Right cardiac atrium (tissue), 5 donors: ENCODE measurements at regions of chr9 and their contacts with region 1.

Region 1: GRCh38 chr9:107282753-107283625 is at the start of gene RAD23B:
- DNase-seq: peak; percentile 99 to 100 (median 99)
- ATAC-seq: peak; percentile 98
- H3K4me3 ChIP-seq: peak within 1 kb of the TSS; percentile 76
- H3K27ac ChIP-seq: peak within 1 kb of the TSS; percentile 94
- H3K4me1 ChIP-seq: no peaks in the 10 kb centered on the region
- H3K27me3 ChIP-seq: no peaks in the 10 kb centered on the region
- total RNA-seq, gene RAD23B: 85.4 to 95.0 (median 89.9) TPM

Region 2: DNA sequence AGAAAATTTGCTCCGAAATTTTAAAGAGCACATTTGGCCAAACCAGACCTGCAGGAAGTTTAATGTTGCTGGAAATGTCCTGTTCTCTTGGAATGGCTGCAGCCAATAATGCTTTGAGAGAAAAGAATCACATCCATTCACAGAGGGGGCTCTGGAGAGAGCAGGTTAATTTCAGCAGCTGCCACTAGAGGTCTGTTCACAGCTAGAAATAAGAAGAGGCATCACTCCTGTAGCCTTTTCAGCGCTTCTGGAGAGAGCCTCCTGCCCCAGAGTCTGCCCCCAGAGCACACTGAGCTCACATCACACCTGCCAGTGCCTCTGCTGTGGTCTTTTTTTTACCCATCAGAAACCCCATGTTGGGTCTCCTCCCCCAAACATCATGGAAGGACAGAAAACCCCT is 124.7 kb before region 1 on chr9:
- intact Hi-C with region 1: no loop called
- DNase-seq: no peak
- ATAC-seq: no peak
- H3K4me3 ChIP-seq: no peak overlapping the region
- H3K27ac ChIP-seq: no peak overlapping the region
- H3K4me1 ChIP-seq: no peaks in the 10 kb centered on the region
- H3K27me3 ChIP-seq: no peaks in the 10 kb centered on the region

Region 3: DNA sequence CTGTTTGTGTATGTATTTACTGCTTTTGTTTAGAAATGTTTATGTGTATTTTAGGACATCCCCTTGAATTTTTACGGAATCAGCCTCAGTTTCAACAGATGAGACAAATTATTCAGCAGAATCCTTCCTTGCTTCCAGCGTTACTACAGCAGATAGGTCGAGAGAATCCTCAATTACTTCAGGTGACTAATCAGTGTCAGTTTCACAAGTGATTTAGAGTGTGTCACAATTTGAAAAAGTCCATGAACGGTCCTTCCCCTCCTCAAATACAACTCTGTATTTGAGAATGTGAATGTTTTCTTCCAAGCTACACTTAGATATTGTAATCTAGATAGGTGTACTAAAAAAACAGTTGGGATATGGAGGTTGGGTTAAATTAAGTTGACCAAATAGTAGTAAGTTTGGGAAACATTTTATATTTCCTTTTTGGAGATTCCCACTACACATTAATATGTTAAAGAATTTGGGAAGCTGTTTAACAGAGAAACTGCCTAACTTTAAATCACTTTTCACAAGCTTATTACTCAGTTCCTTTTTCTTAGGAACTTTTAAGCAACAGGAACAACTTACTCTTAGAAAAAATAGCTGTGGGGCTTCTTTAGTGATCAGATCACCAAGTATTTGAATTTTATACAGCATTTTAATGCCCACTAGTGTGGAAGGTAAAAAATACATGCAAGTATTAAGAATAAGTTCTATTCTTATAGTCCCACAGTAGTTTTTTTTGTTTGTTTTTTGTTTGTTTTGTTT is 41.0 kb after region 1 on chr9:
- intact Hi-C with region 1: loop called in 1 of 4 experiments (anchors 5 kb)
- DNase-seq: no peak
- ATAC-seq: no peak
- H3K4me3 ChIP-seq: no peak overlapping the region
- H3K27ac ChIP-seq: no peak overlapping the region
- H3K4me1 ChIP-seq: peaks cover 2% of the 10 kb centered on the region
- H3K27me3 ChIP-seq: no peaks in the 10 kb centered on the region

Region 4: DNA sequence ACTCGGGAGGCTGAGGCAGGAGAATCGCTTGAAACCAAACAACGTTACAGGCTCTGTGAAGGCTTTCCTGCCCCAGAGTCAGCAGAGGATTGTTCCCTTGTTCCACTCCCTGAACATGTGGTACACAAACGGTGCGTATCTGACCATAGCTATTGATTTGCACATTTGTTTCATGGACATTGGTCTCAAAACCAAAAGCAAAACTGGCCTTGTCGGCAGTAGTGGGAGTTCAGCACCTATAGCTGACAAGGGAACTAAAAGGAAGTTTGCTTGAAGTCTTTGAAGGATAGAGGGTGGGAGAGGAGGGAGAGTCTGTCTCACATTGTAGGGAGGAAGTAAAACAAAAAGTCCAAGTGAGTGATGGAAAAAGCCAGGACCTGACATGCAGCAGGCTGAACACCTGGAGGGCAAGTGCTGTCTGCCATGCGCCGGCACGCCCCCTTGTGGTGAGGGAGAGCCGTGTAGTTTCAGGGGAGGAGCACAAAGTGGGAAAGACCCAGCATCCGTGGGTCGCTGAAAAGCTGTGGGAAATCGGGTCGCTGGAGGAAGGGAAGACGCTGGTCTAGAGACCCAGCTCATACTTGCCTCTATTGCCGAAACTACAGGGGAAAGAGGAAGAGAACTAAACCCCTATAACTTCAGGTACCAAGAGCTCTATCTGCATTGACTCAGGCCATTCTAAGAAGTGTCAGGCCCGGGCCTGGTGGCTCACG is 58.1 kb after region 1 on chr9:
- intact Hi-C with region 1: loop called in 1 of 4 experiments (anchors 10 kb)
- DNase-seq: peak; percentile 69 to 90 (median 87)
- ATAC-seq: peak; percentile 56 to 58
- H3K4me3 ChIP-seq: no peak overlapping the region
- H3K27ac ChIP-seq: no peak overlapping the region
- H3K4me1 ChIP-seq: no peaks in the 10 kb centered on the region
- H3K27me3 ChIP-seq: no peaks in the 10 kb centered on the region